ENCODE measurements at regions of chr5 and their contacts with region 1.

Region 1: DNA sequence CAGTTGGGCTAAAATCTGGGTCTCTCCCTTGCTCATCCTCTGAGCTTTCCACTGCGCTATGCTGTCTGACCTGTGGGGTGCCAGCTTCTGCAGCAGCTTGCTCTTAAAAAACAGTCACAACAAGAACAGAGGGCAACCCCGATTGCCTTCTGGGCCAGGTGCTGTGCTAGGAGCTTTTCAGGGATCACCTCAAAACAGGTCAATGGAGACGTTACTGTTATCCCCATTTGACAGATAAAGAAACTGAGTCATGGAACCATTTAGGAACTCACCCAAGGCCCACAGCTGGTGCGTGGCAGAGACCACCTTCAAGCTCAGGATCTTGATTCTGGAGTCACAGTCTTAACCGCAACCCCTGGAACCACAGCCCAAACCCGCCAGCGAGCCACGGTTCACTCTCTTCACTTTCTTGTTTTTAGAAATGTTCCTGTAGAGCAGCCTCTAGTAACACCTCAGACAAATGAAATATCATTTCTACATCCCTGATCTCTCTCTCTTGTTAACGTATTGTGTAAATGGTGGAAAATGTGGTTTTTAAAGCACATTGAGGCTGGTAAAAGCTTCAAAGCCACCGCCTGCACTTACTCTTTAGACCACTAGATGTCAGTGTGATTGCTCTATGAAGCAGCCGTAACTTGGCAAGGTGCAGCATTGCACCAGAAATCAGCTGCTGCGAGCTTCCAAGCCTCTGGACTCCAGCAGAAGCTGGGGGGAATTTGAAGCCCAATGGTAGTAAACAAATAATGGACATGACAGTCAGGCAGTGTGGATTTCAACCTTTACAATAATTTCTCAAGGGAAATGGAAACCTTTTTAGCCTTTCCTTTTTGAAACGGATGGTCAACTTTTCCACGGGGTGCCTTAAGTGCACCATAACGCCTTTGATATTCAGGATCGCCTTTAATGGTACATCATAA is 1.7 kb downstream of the FYB1 start:
- DNase-seq: peak; percentile 76 to 83
- ATAC-seq: peak; percentile 80 to 90
- H3K4me3 ChIP-seq: no peak overlapping the region
- H3K27ac ChIP-seq: peak overlapping the region in 1 of 2 experiments; percentile 34; a peak in 2 of 6 replicates
- H3K4me1 ChIP-seq: peaks cover 11% of the 10 kb centered on the region
- CTCF ChIP-seq: peak; percentile 89
- EP300 ChIP-seq: no peak
- POLR2A ChIP-seq: no peak
- RAD21 ChIP-seq: peak; percentile 91 to 93

Region 2: GRCh38 chr5:38809388-38810359 is 407.9 kb before region 1 on chr5:
- CTCF ChIA-PET with region 1: no interaction called
- POLR2A ChIA-PET with region 1: no interaction called
- DNase-seq: peak; percentile 80 to 87
- ATAC-seq: peak; percentile 78 to 89
- H3K4me3 ChIP-seq: no peak overlapping the region
- H3K27ac ChIP-seq: peak overlapping the region; percentile 46 to 79; a peak in 4 of 6 replicates
- H3K4me1 ChIP-seq: peaks cover 43% of the 10 kb centered on the region
- CTCF ChIP-seq: peak; percentile 89
- EP300 ChIP-seq: no peak
- POLR2A ChIP-seq: no peak
- RAD21 ChIP-seq: peak; percentile 96 to 99

Region 3: GRCh38 chr5:39177631-39177964 is 40.0 kb before region 1 on chr5:
- CTCF ChIA-PET with region 1: interaction called, 12 read pairs
- POLR2A ChIA-PET with region 1: no interaction called
- DNase-seq: no peak
- ATAC-seq: no peak
- H3K4me3 ChIP-seq: no peak overlapping the region
- H3K27ac ChIP-seq: peak overlapping the region in 1 of 2 experiments; percentile 28; a peak in 2 of 6 replicates
- H3K4me1 ChIP-seq: peaks cover 10% of the 10 kb centered on the region
- CTCF ChIP-seq: no peak
- EP300 ChIP-seq: no peak
- POLR2A ChIP-seq: no peak
- RAD21 ChIP-seq: no peak

Region 4: DNA sequence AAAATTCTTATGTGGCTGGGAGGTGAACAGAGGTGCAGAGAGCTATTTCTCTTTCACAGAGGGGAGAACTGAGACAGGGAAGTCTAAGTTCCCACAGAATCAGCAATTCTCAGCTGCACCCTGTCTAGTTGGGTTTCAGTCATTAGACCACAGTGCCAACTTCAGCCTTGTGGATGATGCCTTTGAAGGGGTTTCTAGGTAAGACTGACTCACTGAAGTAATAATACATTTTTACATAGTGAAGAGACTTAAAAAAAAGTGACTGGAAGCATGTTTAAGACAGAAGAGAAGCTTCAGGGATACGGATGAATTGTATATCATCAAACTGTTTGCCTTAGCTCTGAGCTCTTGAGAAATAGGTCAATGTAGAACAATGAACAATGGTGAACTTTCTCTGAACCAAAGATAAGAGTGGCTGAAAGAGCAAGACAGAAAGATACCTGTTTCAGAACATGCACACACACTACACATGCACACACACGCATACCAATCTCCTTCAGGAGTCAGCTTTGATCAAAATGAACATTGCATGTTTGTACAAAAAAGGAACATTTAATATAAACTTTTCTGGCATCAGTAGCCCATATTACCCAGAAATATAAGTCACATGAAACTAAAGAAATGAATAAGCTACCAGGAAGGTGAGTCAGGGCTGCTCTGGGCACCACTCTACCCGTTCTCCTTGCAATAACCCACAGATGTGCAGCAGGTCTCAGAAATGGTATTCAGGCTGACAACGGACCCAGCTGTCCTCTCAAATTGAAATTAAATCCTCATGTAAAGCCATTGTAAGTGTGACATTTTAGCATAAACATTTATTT is 14.3 kb after region 1 on chr5:
- CTCF ChIA-PET with region 1: interaction called, 51 read pairs
- POLR2A ChIA-PET with region 1: no interaction called
- DNase-seq: peak in 1 of 2 experiments; percentile 62
- ATAC-seq: peak; percentile 77 to 84; a peak in 5 of 6 replicates
- H3K4me3 ChIP-seq: no peak overlapping the region
- H3K27ac ChIP-seq: peak overlapping the region; percentile 39 to 68; a peak in 4 of 6 replicates
- H3K4me1 ChIP-seq: peaks cover 14% of the 10 kb centered on the region; the same call in 2 of the 3 replicates
- CTCF ChIP-seq: no peak
- EP300 ChIP-seq: no peak
- POLR2A ChIP-seq: no peak
- RAD21 ChIP-seq: no peak

Region 5: GRCh38 chr5:39283231-39283818 is 65.7 kb after region 1 on chr5:
- CTCF ChIA-PET with region 1: interaction called, 107 read pairs
- POLR2A ChIA-PET with region 1: no interaction called
- DNase-seq: peak; percentile 65 to 83
- ATAC-seq: peak; percentile 98 to 100
- H3K4me3 ChIP-seq: no peak overlapping the region
- H3K27ac ChIP-seq: peak overlapping the region; percentile 65 to 79
- H3K4me1 ChIP-seq: peaks cover 12% of the 10 kb centered on the region; the same call in 1 of the 3 replicates
- CTCF ChIP-seq: peak; percentile 84
- EP300 ChIP-seq: no peak
- POLR2A ChIP-seq: no peak
- RAD21 ChIP-seq: peak; percentile 95 to 96

Region 6: DNA sequence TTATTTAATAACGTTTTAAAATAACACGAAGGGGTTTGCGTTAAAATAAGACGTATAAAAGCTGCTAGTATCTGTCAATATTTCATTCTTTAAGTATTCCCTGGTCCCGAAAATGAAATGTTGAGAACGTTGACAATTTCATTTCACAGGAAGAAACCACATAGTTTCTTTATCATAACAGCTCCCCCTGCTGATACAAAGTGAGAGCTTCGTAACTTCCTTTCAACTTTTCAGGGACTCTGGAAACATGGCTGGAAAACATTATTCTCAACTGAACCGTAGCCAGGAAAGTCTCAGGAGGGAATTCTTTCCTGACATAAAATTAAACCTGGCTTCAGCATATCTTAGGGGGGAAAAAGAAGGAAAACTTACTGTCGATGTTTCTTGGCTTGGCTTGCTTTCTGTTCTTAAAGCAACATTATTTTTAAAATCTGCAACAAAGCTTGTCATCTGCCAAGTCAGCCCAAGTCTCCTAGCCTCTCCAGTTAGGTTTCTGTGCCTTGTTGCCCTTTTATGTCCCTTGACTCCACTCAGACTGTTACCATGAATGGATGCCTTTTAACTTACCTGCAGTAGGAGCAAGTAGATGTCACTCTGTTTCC is 330.0 kb after region 1 on chr5:
- CTCF ChIA-PET with region 1: interaction called, 16 read pairs
- POLR2A ChIA-PET with region 1: no interaction called
- DNase-seq: peak; percentile 49 to 56
- ATAC-seq: peak in 1 of 2 experiments; percentile 83; a peak in 3 of 6 replicates
- H3K4me3 ChIP-seq: no peak overlapping the region
- H3K27ac ChIP-seq: peak overlapping the region; percentile 19 to 46; a peak in 4 of 6 replicates
- H3K4me1 ChIP-seq: peaks cover 15% of the 10 kb centered on the region; the same call in 2 of the 3 replicates
- CTCF ChIP-seq: peak; percentile 88
- EP300 ChIP-seq: no peak
- POLR2A ChIP-seq: no peak
- RAD21 ChIP-seq: peak; percentile 92 to 94